ENCODE measurements at regions of chr10 and their contacts with region 1.

Region 1: GRCh38 chr10:93482145-93482834 is at the start of gene MYOF:
- DNase-seq: peak; percentile 93
- ATAC-seq: peak; percentile 83
- H3K4me3 ChIP-seq: peak within 1 kb of the TSS; percentile 97
- H3K27ac ChIP-seq: peak within 1 kb of the TSS; percentile 100
- H3K4me1 ChIP-seq: peaks cover 10% of the 10 kb centered on the region
- H3K27me3 ChIP-seq: no peaks in the 10 kb centered on the region
- CTCF ChIP-seq: peak; percentile 83
- POLR2A ChIP-seq: peak; percentile 84
- RAD21 ChIP-seq: peak; percentile 92
- total RNA-seq, gene MYOF: 281 and 332 TPM in 2 replicates

Region 2: GRCh38 chr10:93397020-93397419 is 85.3 kb before region 1 on chr10:
- CTCF ChIA-PET with region 1: interaction called, 6 read pairs
- POLR2A ChIA-PET with region 1: no interaction called
- dilution Hi-C with region 1: no loop called
- in situ Hi-C with region 1: no loop called
- intact Hi-C with region 1: loop called (anchors 5 kb)
- DNase-seq: peak; percentile 61
- ATAC-seq: peak; percentile 69
- H3K4me3 ChIP-seq: no peak overlapping the region
- H3K27ac ChIP-seq: peak overlapping the region; percentile 67; the same call in 1 of the 2 replicates
- H3K4me1 ChIP-seq: peaks cover 16% of the 10 kb centered on the region
- H3K27me3 ChIP-seq: no peaks in the 10 kb centered on the region
- CTCF ChIP-seq: no peak
- POLR2A ChIP-seq: no peak
- RAD21 ChIP-seq: no peak

Region 3: DNA sequence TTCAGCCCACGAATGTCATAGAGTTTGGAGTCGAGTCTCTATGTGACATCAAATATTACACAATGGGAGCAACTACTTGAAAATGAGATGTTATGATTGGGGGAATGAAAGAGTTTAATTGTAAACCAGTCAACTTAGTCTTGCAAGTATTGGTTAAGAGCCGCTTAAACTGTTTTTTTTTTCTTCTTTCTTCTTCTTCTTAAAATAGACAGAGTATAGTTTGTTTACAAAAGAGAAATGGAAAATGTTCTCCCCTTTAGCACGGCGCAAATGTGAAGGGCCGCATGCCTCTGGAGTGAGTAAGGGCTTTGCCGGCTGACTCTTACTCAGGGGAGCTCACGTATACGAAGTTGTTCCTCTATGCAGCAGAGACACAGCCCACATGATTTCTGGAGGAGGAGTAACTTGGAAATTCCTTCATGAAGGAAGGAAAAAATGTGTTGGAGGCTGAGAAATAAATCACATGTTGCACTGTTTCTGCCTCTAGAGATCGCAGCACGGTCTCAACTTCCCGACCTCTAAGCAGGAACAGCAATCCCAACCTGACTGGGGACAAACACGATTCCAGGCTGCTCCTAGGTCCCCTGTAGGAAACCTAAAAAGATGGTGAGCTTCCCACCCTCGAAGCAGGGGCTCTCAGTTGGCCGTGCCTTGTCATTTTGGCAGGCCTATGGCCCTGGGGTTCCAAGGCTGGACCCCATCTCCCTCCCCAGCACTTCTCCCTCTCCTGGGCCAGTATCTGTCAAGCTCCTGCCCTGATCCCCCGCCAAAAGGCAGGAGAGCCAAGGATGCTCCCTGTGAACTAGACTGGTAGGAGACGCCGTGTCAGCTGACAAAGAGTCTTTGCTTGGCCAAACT is 45.0 kb before region 1 on chr10:
- CTCF ChIA-PET with region 1: interaction called, 14 read pairs
- POLR2A ChIA-PET with region 1: interaction called, 4 read pairs
- dilution Hi-C with region 1: no loop called
- in situ Hi-C with region 1: no loop called
- intact Hi-C with region 1: loop called (anchors 1 kb)
- DNase-seq: peak; percentile 99
- ATAC-seq: peak; percentile 91
- H3K4me3 ChIP-seq: no peak overlapping the region
- H3K27ac ChIP-seq: peak overlapping the region; percentile 91
- H3K4me1 ChIP-seq: peaks cover 35% of the 10 kb centered on the region
- H3K27me3 ChIP-seq: no peaks in the 10 kb centered on the region
- CTCF ChIP-seq: no peak; the same call in 1 of the 2 replicates
- POLR2A ChIP-seq: peak; percentile 35
- RAD21 ChIP-seq: peak; percentile 4; the same call in 1 of the 2 replicates

Region 4: DNA sequence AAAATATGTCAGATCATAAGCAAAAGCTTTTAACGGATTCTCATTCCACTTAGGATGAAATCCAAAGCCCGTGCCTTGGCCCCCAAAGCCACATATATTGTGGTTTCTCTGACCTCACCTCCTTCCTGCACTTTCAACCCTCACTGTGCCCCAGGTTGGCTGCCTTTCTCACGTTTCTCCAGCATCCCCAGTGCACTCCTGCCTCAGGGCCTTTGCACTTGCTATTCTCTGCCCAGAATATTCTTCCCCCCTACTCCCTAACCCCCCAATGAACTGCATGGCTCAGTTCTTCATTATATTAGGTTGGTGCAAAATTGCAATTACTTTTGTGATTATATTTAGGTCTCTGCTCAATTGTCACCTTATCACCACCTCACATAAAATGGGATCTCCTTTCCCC is 34.3 kb before region 1 on chr10:
- CTCF ChIA-PET with region 1: no interaction called
- POLR2A ChIA-PET with region 1: no interaction called
- dilution Hi-C with region 1: no loop called
- in situ Hi-C with region 1: no loop called
- intact Hi-C with region 1: no loop called
- DNase-seq: no peak
- ATAC-seq: no peak
- H3K4me3 ChIP-seq: no peak overlapping the region
- H3K27ac ChIP-seq: no peak overlapping the region
- H3K4me1 ChIP-seq: peaks cover 18% of the 10 kb centered on the region
- H3K27me3 ChIP-seq: no peaks in the 10 kb centered on the region
- CTCF ChIP-seq: no peak
- POLR2A ChIP-seq: no peak
- RAD21 ChIP-seq: no peak

Region 5: GRCh38 chr10:93463678-93464476 is 18.4 kb before region 1 on chr10:
- CTCF ChIA-PET with region 1: interaction called, 21 read pairs
- POLR2A ChIA-PET with region 1: interaction called, 5 read pairs
- dilution Hi-C with region 1: no loop called
- in situ Hi-C with region 1: no loop called
- intact Hi-C with region 1: no loop called
- DNase-seq: peak; percentile 71
- ATAC-seq: peak; percentile 0; the same call in 1 of the 2 replicates
- H3K4me3 ChIP-seq: no peak overlapping the region
- H3K27ac ChIP-seq: peak overlapping the region; percentile 82
- H3K4me1 ChIP-seq: peaks cover 52% of the 10 kb centered on the region
- H3K27me3 ChIP-seq: no peaks in the 10 kb centered on the region
- CTCF ChIP-seq: no peak
- POLR2A ChIP-seq: no peak
- RAD21 ChIP-seq: no peak

Region 6: GRCh38 chr10:94076321-94076841 is 594.1 kb after region 1 on chr10:
- CTCF ChIA-PET with region 1: no interaction called
- POLR2A ChIA-PET with region 1: no interaction called
- dilution Hi-C with region 1: no loop called
- in situ Hi-C with region 1: no loop called
- intact Hi-C with region 1: no loop called
- DNase-seq: peak; percentile 71
- ATAC-seq: peak; percentile 85
- H3K4me3 ChIP-seq: no peak overlapping the region
- H3K27ac ChIP-seq: no peak overlapping the region
- H3K4me1 ChIP-seq: peaks cover 1% of the 10 kb centered on the region; the same call in 1 of the 2 replicates
- H3K27me3 ChIP-seq: no peaks in the 10 kb centered on the region
- CTCF ChIP-seq: peak; percentile 73
- POLR2A ChIP-seq: no peak
- RAD21 ChIP-seq: peak; percentile 84

Measured in IMR-90 (cell line).